Mammary epithelial cell (primary cell): ENCODE measurements at regions of chr3 and their contacts with region 1.

Region 1: GRCh38 chr3:112773864-112774590 is 72.6 kb downstream of the CD200R1L start:
- DNase-seq: peak; percentile 97
- H3K4me3 ChIP-seq: no peak overlapping the region
- H3K27ac ChIP-seq: peak overlapping the region; percentile 95
- H3K4me1 ChIP-seq: peaks cover 65% of the 10 kb centered on the region
- H3K27me3 ChIP-seq: no peaks in the 10 kb centered on the region
- CTCF ChIP-seq: no peak

Region 2: DNA sequence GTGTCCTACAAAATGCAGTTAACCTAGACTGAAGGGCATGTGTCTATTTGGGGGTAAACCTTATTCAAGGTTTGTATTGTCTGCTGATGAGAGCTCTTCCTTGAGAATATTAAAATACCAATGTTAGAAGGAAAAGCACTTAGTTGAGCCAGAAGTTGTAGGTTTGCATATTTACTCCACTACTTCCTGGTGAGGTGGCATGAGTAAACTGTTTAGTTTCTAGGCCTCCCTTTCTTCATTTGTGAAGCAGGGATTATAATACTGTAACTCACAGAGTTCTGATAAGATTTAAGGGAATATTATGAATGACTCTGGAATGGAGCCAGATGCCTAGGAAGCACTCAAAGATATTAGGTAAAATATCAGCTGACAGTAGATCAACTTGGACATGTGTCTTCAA is 25.9 kb after region 1 on chr3:
- CTCF ChIA-PET with region 1: interaction called, 3 read pairs
- dilution Hi-C with region 1: no loop called
- in situ Hi-C with region 1: no loop called
- intact Hi-C with region 1: loop called (anchors 1 kb)
- DNase-seq: no peak
- H3K4me3 ChIP-seq: no peak overlapping the region
- H3K27ac ChIP-seq: no peak overlapping the region
- H3K4me1 ChIP-seq: peaks cover 23% of the 10 kb centered on the region
- H3K27me3 ChIP-seq: no peaks in the 10 kb centered on the region
- CTCF ChIP-seq: no peak

Region 3: GRCh38 chr3:112814266-112814665 is 40.2 kb after region 1 on chr3:
- CTCF ChIA-PET with region 1: interaction called, 4 read pairs
- dilution Hi-C with region 1: no loop called
- in situ Hi-C with region 1: no loop called
- intact Hi-C with region 1: loop called (anchors 1 kb)
- DNase-seq: peak; percentile 46
- H3K4me3 ChIP-seq: no peak overlapping the region
- H3K27ac ChIP-seq: no peak overlapping the region
- H3K4me1 ChIP-seq: peaks cover 7% of the 10 kb centered on the region
- H3K27me3 ChIP-seq: no peaks in the 10 kb centered on the region
- CTCF ChIP-seq: peak; percentile 38 to 66

Region 4: DNA sequence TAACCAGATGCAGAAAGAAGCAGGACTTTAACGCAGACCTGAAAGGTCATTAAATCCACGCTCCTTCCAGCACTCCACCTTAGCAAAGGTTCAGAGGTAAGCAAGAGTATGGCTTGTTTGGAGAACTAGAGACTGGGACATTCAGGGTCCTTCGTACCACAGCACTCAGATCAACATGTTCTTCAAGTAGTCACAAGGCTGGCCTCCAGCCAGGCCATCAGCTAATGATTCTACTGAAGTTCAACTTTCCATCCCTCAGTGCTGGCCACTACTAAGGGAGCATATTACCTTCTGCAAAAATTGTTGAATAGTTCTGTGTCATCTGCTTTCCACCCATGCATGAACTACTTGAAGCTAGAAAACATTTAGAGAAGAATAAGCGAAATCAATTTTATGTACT is 55.0 kb after region 1 on chr3:
- CTCF ChIA-PET with region 1: no interaction called
- dilution Hi-C with region 1: no loop called
- in situ Hi-C with region 1: no loop called
- intact Hi-C with region 1: no loop called
- DNase-seq: no peak
- H3K4me3 ChIP-seq: no peak overlapping the region
- H3K27ac ChIP-seq: no peak overlapping the region
- H3K4me1 ChIP-seq: no peaks in the 10 kb centered on the region
- H3K27me3 ChIP-seq: no peaks in the 10 kb centered on the region
- CTCF ChIP-seq: no peak